CD4-positive, alpha-beta T cell (primary cell): ENCODE measurements at regions of chr7 and their contacts with region 1.

Region 1: GRCh38 chr7:130529417-130529816 is 37.5 kb downstream of the MEST start:
- DNase-seq: no peak
- ATAC-seq: no peak
- H3K4me3 ChIP-seq: no peak overlapping the region
- H3K4me3 Mint-ChIP-seq: no peak overlapping the region
- H3K27ac ChIP-seq: no peak overlapping the region
- H3K27ac Mint-ChIP-seq: no peak overlapping the region
- H3K4me1 ChIP-seq: no peaks in the 10 kb centered on the region
- H3K4me1 Mint-ChIP-seq: no peaks in the 10 kb centered on the region
- H3K27me3 ChIP-seq: no peaks in the 10 kb centered on the region
- H3K27me3 Mint-ChIP-seq: no peaks in the 10 kb centered on the region
- CTCF ChIP-seq: no peak

Region 2: DNA sequence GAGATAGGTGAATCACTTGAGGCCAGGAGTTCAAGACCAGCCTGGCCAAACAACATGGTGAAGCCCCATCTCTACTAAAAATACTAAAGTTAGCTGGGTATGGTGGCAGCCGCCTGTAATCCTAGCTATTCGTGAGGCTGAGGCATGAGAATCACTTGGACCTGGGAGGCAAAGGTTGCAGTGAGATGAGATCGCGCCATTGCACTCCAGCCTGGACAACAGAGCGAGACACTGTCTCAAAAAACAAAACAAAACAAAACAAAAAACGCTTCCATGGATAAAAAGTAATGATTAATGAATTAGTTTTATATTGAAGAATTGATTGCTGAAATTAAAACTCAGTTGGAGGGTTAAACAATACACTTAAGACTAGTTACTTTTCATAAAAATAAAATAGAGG is 426.8 kb before region 1 on chr7:
- CTCF ChIA-PET with region 1: no interaction called
- POLR2A ChIA-PET with region 1: no interaction called
- intact Hi-C with region 1: loop called in 1 of 2 experiments (anchors 5 kb)
- DNase-seq: no peak
- ATAC-seq: no peak
- H3K4me3 ChIP-seq: no peak overlapping the region
- H3K4me3 Mint-ChIP-seq: no peak overlapping the region
- H3K27ac ChIP-seq: no peak overlapping the region
- H3K27ac Mint-ChIP-seq: no peak overlapping the region
- H3K4me1 ChIP-seq: no peaks in the 10 kb centered on the region
- H3K4me1 Mint-ChIP-seq: no peaks in the 10 kb centered on the region
- H3K27me3 ChIP-seq: no peaks in the 10 kb centered on the region
- H3K27me3 Mint-ChIP-seq: no peaks in the 10 kb centered on the region
- CTCF ChIP-seq: no peak